MCF 10A (cell line): ENCODE measurements at regions of chr3 and their contacts with region 1.

Region 1: DNA sequence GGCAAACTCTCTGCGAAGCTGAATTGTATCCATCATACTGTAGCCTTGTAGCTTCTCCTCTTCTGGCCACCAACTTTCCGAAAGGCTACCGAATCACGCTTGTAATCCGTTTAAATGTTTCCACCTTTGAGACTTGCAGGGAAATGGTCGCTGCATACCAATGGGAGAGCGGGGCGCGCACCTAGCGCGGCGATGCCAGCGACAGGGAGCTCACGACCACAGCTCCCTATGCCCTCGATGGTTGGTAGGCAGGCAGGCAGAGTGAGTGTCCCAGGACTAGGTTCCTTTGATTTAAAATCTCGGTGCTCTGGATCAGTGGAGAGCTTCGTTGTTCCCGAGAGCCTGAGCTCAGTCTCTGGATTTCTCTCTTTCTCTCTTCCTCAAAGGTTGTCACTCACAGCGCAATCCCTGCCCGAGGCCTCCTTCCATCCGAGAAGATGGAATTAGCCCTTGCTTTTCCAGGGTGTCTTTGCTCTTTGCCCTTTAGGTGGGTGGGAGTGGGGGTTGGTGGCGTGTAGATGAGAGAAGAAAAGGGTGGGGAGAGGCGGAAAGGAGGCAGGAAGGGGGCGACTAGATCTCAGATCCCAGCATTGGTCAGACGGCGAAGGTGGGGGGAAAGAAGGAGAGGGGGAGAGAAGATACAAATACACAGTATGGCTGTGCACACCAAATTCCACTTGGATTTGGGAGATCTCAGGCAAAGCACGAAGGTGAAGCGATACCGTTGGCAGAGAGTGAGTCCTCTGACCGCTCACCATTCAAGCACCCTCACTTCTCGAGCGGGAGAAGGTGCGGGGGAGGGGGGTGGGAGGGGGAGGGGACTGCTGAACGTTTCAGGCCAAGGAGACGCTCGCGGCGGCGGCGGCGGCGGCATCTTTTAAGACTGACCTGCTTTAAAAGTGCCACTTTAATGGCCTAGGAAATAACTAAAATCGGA is at the start of gene SLITRK3:
- DNase-seq: no peak
- H3K4me3 Mint-ChIP-seq: no peak within 1 kb of the TSS
- H3K27ac Mint-ChIP-seq: no peak within 1 kb of the TSS
- H3K4me1 Mint-ChIP-seq: peaks cover 17% of the 10 kb centered on the region
- H3K27me3 Mint-ChIP-seq: peaks cover 63% of the 10 kb centered on the region
- CTCF ChIP-seq: no peak
- total RNA-seq, gene SLITRK3: not detected in 2 replicates

Region 2: DNA sequence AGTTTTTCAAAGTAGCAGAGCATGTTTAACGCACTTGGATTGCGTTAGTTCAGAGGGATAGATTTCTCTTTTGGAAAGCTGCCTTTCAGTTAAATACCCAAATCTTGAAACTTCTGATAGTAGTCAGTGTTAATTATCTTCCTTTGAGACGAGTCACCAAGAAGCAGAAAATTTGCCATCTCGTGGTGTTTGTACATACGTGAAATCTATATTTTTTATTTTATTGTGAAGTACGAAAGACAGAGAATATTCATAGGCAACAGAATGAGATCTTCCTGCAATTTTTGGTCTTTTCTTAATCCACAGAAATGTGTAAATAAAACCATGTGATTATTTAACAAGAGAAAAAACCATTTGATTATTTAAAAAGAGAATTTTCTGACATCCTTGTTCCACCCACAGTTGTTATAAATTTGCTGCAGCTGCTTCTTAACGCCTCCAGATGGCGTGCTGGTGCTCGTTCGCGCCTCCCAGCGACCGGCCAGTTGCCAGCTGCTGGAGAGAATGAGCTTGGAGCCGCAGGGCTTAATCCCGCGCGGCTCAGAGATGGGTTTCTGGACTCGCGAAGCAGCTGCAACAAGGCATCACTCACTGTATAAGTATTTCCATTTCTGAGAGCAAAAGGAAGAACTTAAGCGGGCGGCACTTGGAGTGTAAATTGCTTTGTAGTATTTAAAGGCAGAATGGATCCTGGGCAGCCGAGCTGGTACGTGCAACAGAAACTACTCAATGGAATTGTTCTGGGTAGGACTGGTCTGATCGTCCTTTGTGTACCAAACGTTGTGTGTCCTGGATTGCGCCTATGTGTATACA is 10.8 kb after region 1 on chr3:
- CTCF ChIA-PET with region 1: interaction called, 18 read pairs
- POLR2A ChIA-PET with region 1: no interaction called
- intact Hi-C with region 1: no loop called
- DNase-seq: peak; percentile 85
- H3K4me3 Mint-ChIP-seq: peak overlapping the region; percentile 70
- H3K27ac Mint-ChIP-seq: no peak overlapping the region
- H3K4me1 Mint-ChIP-seq: no peaks in the 10 kb centered on the region
- H3K27me3 Mint-ChIP-seq: no peaks in the 10 kb centered on the region
- CTCF ChIP-seq: peak; percentile 74